Psoas muscle (tissue), 8 donors: ENCODE measurements at regions of chr13 and their contacts with region 1.

Region 1: GRCh38 chr13:72727417-72728289 is at the starts of genes BORA and MZT1:
- DNase-seq: peak; percentile 96 to 97
- ATAC-seq: peak; percentile 98 to 99 (median 98)
- H3K4me3 ChIP-seq: peak within 1 kb of the TSS; percentile 97
- H3K27ac ChIP-seq: peak within 1 kb of the TSS; percentile 75
- H3K4me1 ChIP-seq: peaks cover 16% of the 10 kb centered on the region
- H3K27me3 ChIP-seq: no peaks in the 10 kb centered on the region
- CTCF ChIP-seq: no peak
- total RNA-seq, gene BORA: 0.34 to 1.1 (median 0.52) TPM
- total RNA-seq, gene MZT1: 6.4 to 10.6 (median 8.7) TPM

Region 2: DNA sequence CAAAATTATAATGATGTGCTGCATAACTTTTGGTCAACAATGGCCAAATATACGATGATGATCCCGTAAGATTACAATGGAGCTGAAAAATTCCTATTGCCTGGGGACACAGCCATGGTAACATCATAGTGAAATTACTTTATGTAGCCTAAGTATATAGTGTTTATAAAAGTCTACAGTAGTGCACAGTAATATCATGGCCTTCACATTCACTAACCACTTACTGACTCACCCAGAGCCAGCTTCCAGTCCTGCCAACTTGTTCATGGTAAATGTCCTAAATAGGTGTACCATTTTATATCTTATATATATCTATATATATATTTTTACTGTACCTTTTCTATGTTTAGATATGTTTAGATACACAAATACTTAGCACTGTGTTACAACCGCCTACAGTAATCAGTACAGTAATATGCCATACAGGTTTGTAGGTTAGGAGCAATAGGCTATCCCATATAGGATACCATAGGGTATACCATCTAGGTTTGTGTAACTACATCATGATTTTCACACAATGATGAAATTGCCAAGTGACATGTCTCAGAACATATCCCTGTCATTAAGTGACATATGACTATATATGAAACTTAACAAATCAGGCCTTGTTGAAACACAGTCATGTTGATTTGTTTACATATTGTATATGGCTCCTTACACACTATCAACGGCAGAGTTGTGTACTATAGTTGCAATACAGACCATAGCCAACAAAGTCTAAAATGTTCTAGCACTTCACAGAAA is 30.3 kb after region 1 on chr13:
- intact Hi-C with region 1: no loop called
- DNase-seq: no peak
- ATAC-seq: no peak
- H3K4me3 ChIP-seq: no peak overlapping the region
- H3K27ac ChIP-seq: no peak overlapping the region
- H3K4me1 ChIP-seq: no peaks in the 10 kb centered on the region
- H3K27me3 ChIP-seq: no peaks in the 10 kb centered on the region
- CTCF ChIP-seq: no peak

Region 3: GRCh38 chr13:72781451-72782439 is 54.1 kb after region 1 on chr13 and contains the starts of genes DIS3 and PIBF1:
- intact Hi-C with region 1: loop called (anchors 1 to 5 kb)
- DNase-seq: peak; percentile 98 to 99
- ATAC-seq: peak; percentile 100
- H3K4me3 ChIP-seq: peak within 1 kb of the TSS; percentile 89
- H3K27ac ChIP-seq: peak within 1 kb of the TSS; percentile 89
- H3K4me1 ChIP-seq: peaks cover 25% of the 10 kb centered on the region
- H3K27me3 ChIP-seq: no peaks in the 10 kb centered on the region
- CTCF ChIP-seq: no peak
- total RNA-seq, gene DIS3: 13.4 to 19.7 (median 15.5) TPM
- total RNA-seq, gene PIBF1: 6.8 to 12.8 (median 10.1) TPM